GM18951 (cell line): ENCODE measurements at regions of chr15 and their contacts with region 1.

Region 1: GRCh38 chr15:34101366-34102175 is at the starts of genes EMC7 and PGBD4:
- POLR2A ChIP-seq: peak; percentile 98

Region 2: GRCh38 chr15:33985290-33985689 is 116.3 kb before region 1 on chr15:
- in situ Hi-C with region 1: no loop called
- POLR2A ChIP-seq: no peak

Region 3: GRCh38 chr15:34209421-34210282 is 108.1 kb after region 1 on chr15 and contains the start of gene KATNBL1:
- in situ Hi-C with region 1: loop called (anchors 10 kb)
- POLR2A ChIP-seq: peak; percentile 96

Region 4: DNA sequence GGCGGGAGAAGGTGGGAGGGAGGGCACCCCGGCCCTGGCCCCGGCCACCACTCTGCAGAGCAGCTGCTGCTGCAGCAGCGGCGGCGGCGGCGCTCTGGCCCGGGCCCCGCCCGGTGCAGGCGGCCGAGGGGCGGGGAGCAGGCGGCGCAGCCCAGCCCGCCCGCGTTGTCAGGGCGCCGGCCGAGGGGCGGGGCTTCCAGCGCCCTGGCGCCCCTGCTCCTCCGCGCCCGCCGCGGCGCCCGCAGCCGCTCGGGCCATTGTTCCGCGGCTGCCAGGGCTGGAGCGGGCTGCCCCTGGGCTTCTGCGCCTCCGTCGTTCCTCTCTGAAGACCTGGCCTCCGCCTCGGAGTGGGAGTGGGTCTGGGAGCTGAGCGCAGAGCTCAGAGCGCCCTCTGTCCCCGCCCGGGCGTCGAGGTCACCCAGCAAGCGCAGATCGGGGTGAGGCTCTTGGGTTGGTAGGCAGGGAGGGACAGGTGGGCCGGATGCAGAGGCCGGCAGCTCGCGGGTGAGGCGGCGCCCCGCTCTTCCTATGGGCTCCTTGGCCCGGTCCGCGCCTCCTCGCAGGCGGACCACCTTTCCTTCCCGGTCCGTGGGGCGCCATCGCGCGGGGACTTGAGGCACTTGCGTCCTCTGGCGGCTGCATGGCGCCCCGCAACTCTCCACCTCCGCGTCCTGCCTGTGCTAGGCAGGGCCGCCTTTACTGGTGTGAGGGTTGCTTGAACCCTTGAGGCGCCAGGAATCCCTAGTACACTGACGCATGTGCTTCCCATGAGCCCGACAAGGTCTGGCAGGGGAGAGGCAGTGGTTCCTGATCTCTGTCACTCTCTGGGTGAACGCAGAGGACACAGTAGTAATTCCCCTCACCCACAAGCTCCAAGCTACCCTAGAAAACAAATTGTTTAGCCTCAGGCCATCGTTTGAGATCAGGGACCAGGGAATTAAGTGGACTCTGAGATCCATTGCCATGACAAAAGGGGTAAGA is 265.8 kb after region 1 on chr15 and contains the start of gene LPCAT4:
- in situ Hi-C with region 1: loop called (anchors 25 kb)
- POLR2A ChIP-seq: peak; percentile 93